Activated naive CD4-positive, alpha-beta T cell treated with anti-CD3 and anti-CD28 coated beads for 36 hours (primary cell): ENCODE measurements at regions of chr13 and their contacts with region 1.

Region 1: DNA sequence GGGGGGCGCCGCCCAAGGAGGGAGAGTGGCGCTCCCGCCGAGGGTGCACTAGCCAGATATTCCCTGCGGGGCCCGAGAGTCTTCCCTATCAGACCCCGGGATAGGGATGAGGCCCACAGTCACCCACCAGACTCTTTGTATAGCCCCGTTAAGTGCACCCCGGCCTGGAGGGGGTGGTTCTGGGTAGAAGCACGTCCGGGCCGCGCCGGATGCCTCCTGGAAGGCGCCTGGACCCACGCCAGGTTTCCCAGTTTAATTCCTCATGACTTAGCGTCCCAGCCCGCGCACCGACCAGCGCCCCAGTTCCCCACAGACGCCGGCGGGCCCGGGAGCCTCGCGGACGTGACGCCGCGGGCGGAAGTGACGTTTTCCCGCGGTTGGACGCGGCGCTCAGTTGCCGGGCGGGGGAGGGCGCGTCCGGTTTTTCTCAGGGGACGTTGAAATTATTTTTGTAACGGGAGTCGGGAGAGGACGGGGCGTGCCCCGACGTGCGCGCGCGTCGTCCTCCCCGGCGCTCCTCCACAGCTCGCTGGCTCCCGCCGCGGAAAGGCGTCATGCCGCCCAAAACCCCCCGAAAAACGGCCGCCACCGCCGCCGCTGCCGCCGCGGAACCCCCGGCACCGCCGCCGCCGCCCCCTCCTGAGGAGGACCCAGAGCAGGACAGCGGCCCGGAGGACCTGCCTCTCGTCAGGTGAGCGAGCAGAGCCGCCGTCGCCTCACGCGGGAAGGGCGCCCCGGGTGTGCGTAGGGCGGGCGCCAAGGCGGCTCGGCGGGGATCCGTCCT is at the start of gene RB1:
- DNase-seq: peak; percentile 92
- H3K4me3 Mint-ChIP-seq: peak within 1 kb of the TSS; percentile 87
- H3K27ac Mint-ChIP-seq: peak within 1 kb of the TSS; percentile 97
- H3K4me1 Mint-ChIP-seq: peaks cover 23% of the 10 kb centered on the region
- H3K27me3 Mint-ChIP-seq: no peaks in the 10 kb centered on the region
- total RNA-seq, gene RB1: 25.1 to 25.6 TPM

Region 2: DNA sequence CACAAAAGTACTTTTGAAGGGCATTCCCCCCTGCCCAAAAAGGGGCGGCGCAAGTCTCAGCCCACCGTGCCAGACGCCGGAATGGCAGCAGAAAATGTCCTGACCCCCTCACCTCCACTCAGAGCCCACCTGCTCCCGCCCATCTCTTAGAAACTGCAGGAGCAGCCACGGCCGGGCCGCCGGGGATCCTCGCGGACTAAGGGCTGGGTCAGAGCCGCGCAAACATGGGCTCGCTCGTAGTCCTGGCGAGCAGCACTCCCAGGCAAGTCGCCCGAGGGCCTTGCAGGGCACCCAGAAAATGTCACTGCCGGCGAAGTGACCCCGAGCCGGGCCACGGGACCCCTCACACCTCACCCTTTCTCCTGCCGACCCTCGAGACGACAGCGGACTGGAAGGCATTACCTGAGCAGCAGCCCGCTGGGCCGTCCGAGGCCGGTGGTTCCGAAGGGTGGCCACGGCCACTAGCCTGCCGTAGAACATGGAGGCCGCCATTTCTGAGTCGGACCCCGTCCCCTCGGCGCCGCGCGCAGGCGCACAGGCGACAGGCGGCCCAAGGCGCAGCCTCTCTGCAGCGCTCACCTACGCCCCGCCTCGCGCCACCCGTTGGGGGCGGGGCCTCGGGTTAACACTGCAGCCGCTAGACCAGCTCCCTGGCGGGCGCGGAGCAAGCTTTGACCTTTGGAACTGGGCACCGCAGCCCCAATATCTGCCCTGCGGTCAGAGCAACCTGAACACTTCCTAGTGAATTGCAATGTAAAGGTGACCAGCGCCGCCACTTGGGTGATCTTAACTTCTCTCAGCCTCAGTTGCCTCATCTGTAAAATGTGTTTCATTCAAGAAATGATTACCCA is 302.5 kb before region 1 on chr13 and contains the start of gene SUCLA2:
- CTCF ChIA-PET with region 1: no interaction called
- intact Hi-C with region 1: loop called (anchors 1 kb)
- DNase-seq: peak; percentile 92
- H3K4me3 Mint-ChIP-seq: peak within 1 kb of the TSS; percentile 94
- H3K27ac Mint-ChIP-seq: peak within 1 kb of the TSS; percentile 81
- H3K4me1 Mint-ChIP-seq: peaks cover 31% of the 10 kb centered on the region
- H3K27me3 Mint-ChIP-seq: no peaks in the 10 kb centered on the region
- total RNA-seq, gene SUCLA2: 44.0 to 44.4 TPM

Region 3: GRCh38 chr13:48126944-48127830 is 176.4 kb before region 1 on chr13:
- CTCF ChIA-PET with region 1: interaction called, 3 read pairs
- intact Hi-C with region 1: loop called (anchors 1 kb)
- DNase-seq: peak; percentile 46
- H3K4me3 Mint-ChIP-seq: peak overlapping the region; percentile 0
- H3K27ac Mint-ChIP-seq: peak overlapping the region; percentile 44
- H3K4me1 Mint-ChIP-seq: peaks cover 29% of the 10 kb centered on the region
- H3K27me3 Mint-ChIP-seq: no peaks in the 10 kb centered on the region

Region 4: DNA sequence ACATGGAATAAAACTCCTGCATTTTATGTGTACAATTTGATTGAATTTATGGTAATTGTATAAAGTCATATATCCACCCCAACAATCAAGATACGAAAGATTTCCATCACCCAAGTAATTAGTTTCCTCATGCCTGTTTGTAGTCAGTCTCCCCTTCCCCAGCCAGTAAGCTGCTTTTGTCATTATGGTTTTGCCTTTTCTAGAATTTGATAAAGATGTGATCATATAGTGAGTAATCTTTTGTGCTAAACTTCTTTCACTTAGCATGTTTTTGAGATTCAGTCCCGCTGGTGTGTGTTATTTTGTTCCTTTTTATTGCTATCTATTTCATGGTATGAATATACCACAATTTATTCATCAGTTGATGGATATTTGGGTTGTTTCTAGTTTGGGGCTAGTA is 54.5 kb before region 1 on chr13:
- CTCF ChIA-PET with region 1: no interaction called
- intact Hi-C with region 1: loop called (anchors 1 kb)
- DNase-seq: no peak
- H3K4me3 Mint-ChIP-seq: peak overlapping the region; percentile 16
- H3K27ac Mint-ChIP-seq: peak overlapping the region; percentile 81
- H3K4me1 Mint-ChIP-seq: peaks cover 72% of the 10 kb centered on the region
- H3K27me3 Mint-ChIP-seq: no peaks in the 10 kb centered on the region

Region 5: GRCh38 chr13:48412881-48413351 is 109.4 kb after region 1 on chr13 and contains the start of gene LPAR6:
- CTCF ChIA-PET with region 1: no interaction called
- intact Hi-C with region 1: loop called (anchors 2 kb)
- DNase-seq: peak; percentile 20
- H3K4me3 Mint-ChIP-seq: peak within 1 kb of the TSS; percentile 84
- H3K27ac Mint-ChIP-seq: peak within 1 kb of the TSS; percentile 92
- H3K4me1 Mint-ChIP-seq: peaks cover 33% of the 10 kb centered on the region
- H3K27me3 Mint-ChIP-seq: no peaks in the 10 kb centered on the region
- total RNA-seq, gene LPAR6: 6.1 to 6.6 TPM

Region 6: DNA sequence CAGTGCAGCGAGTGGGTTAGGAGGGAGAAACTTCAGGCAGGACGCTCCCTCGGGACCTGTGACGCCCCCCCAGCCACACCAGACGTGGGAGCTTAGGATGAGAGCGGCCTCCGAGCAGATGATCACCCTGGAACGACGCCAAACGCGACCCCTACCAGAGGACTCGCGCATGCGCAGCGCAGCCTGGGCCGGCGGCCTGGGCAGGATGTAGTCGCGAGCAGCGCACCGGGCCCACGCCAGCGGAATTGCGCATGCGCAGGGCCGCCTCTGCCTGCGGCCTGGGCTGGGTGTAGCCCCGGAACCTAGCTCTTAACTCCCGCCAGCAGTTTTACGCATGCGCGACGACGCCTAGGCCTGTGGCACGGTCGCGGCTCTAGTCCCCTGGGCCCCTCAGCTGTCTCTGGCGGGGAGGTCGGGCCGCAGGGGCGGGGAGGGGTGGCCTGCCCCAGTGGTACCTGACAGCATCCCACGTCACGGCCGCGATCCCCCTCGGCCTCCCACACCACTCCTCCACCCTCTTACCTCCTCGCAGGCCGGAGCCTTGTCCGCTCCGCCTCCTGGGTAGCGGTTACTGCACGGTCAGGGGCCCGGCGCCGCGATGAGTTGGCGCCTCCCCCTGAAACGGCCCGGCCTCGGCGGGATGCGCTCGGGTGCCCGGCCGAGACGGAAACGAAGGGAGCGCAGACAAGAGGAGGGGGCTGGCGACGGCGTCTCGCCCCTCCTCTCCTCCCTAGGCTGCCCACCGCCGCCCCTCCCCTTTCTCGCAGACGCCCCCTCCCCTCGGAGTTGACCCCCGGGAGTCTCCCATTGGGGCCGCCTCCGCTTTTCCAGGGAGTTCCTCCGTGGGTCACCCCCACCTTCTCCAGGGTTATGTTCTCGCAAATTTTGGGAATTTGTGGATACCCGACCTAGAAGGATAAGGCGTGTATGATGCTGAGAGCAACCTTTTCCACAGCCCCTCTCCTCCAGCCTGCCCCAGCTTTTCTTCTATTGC is 229.3 kb after region 1 on chr13 and contains the start of gene RCBTB2:
- CTCF ChIA-PET with region 1: no interaction called
- intact Hi-C with region 1: loop called (anchors 1 kb)
- DNase-seq: peak; percentile 98
- H3K4me3 Mint-ChIP-seq: peak within 1 kb of the TSS; percentile 93
- H3K27ac Mint-ChIP-seq: peak within 1 kb of the TSS; percentile 97
- H3K4me1 Mint-ChIP-seq: peaks cover 17% of the 10 kb centered on the region
- H3K27me3 Mint-ChIP-seq: no peaks in the 10 kb centered on the region
- total RNA-seq, gene RCBTB2: 1.2 to 1.4 TPM